CD4-positive, alpha-beta T cell (primary cell): ENCODE measurements at regions of chr14 and their contacts with region 1.

Region 1: GRCh38 chr14:35121887-35122695 is at the starts of genes PPP2R3C and PRORP:
- DNase-seq: peak; percentile 82 to 98 (median 87)
- ATAC-seq: peak; percentile 81
- H3K4me3 ChIP-seq: peak within 1 kb of the TSS; percentile 75
- H3K4me3 Mint-ChIP-seq: peak within 1 kb of the TSS; percentile 100
- H3K27ac ChIP-seq: peak within 1 kb of the TSS; percentile 99
- H3K27ac Mint-ChIP-seq: peak within 1 kb of the TSS; percentile 99
- H3K4me1 ChIP-seq: peaks cover 56% of the 10 kb centered on the region
- H3K4me1 Mint-ChIP-seq: peaks cover 79% of the 10 kb centered on the region
- H3K27me3 ChIP-seq: no peaks in the 10 kb centered on the region
- H3K27me3 Mint-ChIP-seq: no peaks in the 10 kb centered on the region
- CTCF ChIP-seq: no peak
- total RNA-seq, gene PPP2R3C: 34.9 to 37.6 TPM
- total RNA-seq, gene PRORP: 27.0 to 32.0 TPM

Region 2: GRCh38 chr14:34539407-34540180 is 582.5 kb before region 1 on chr14 and contains the start of gene EAPP:
- CTCF ChIA-PET with region 1: no interaction called
- POLR2A ChIA-PET with region 1: no interaction called
- intact Hi-C with region 1: loop called in 1 of 2 experiments (anchors 5 kb)
- DNase-seq: peak; percentile 90 to 97 (median 95)
- ATAC-seq: peak; percentile 97
- H3K4me3 ChIP-seq: peak within 1 kb of the TSS; percentile 88
- H3K4me3 Mint-ChIP-seq: peak within 1 kb of the TSS; percentile 99
- H3K27ac ChIP-seq: peak within 1 kb of the TSS; percentile 89 to 93
- H3K27ac Mint-ChIP-seq: peak within 1 kb of the TSS; percentile 98
- H3K4me1 ChIP-seq: peaks cover 31% of the 10 kb centered on the region
- H3K4me1 Mint-ChIP-seq: peaks cover 33% of the 10 kb centered on the region
- H3K27me3 ChIP-seq: no peaks in the 10 kb centered on the region
- H3K27me3 Mint-ChIP-seq: no peaks in the 10 kb centered on the region
- CTCF ChIP-seq: no peak
- total RNA-seq, gene EAPP: 94.5 to 98.3 TPM

Region 3: GRCh38 chr14:34875031-34875922 is 246.8 kb before region 1 on chr14 and contains the start of gene BAZ1A:
- CTCF ChIA-PET with region 1: no interaction called
- POLR2A ChIA-PET with region 1: interaction called, 18 read pairs
- intact Hi-C with region 1: loop called in 1 of 2 experiments (anchors 2 kb)
- DNase-seq: peak; percentile 1 to 82 (median 18)
- ATAC-seq: peak; percentile 9
- H3K4me3 ChIP-seq: peak within 1 kb of the TSS; percentile 96
- H3K4me3 Mint-ChIP-seq: peak within 1 kb of the TSS; percentile 100
- H3K27ac ChIP-seq: peak within 1 kb of the TSS; percentile 100
- H3K27ac Mint-ChIP-seq: peak within 1 kb of the TSS; percentile 97
- H3K4me1 ChIP-seq: peaks cover 19% of the 10 kb centered on the region
- H3K4me1 Mint-ChIP-seq: peaks cover 40% of the 10 kb centered on the region
- H3K27me3 ChIP-seq: no peaks in the 10 kb centered on the region
- H3K27me3 Mint-ChIP-seq: no peaks in the 10 kb centered on the region
- CTCF ChIP-seq: no peak
- total RNA-seq, gene BAZ1A: 46.5 to 52.3 TPM

Region 4: DNA sequence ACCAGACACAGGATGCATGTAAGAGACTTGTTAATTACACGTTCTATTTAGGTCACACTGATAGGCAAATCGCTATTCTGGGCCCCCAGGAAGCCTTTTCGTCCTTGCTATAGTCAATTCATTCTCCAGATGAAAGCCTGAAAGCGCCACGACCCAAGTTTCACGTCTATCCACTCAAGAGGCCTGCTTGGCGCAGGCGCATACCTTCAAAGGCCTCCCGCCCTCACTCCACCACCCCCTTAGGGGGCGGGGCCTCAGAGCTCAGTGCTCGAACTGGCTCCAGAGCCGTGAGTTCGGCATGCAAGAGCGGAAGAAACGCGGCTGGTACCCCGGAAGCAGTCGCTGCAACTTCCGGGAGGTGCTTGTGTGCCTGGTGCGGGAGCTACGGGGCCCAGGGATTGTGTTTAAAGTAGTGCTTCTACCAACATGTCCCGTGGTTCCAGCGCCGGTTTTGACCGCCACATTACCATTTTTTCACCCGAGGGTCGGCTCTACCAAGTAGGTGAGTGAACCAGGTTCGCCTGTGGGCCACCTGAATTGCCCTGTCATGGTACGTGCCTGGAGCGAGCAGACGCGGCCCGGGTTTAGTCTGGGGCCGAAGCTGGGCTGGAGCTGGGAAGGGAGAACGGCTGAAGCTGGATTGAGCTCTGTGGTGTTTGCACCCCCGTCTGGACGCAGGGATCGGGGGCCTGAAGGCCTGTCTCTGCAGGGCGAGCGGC is 170.1 kb after region 1 on chr14 and contains the start of gene PSMA6:
- CTCF ChIA-PET with region 1: interaction called, 3 read pairs
- POLR2A ChIA-PET with region 1: interaction called, 28 read pairs
- intact Hi-C with region 1: loop called (anchors 1 to 2 kb)
- DNase-seq: peak; percentile 97 to 100 (median 99)
- ATAC-seq: peak; percentile 96
- H3K4me3 ChIP-seq: peak within 1 kb of the TSS; percentile 78
- H3K4me3 Mint-ChIP-seq: peak within 1 kb of the TSS; percentile 98
- H3K27ac ChIP-seq: peak within 1 kb of the TSS; percentile 80 to 86
- H3K27ac Mint-ChIP-seq: peak within 1 kb of the TSS; percentile 95
- H3K4me1 ChIP-seq: peaks cover 38% of the 10 kb centered on the region
- H3K4me1 Mint-ChIP-seq: peaks cover 50% of the 10 kb centered on the region
- H3K27me3 ChIP-seq: no peaks in the 10 kb centered on the region
- H3K27me3 Mint-ChIP-seq: no peaks in the 10 kb centered on the region
- CTCF ChIP-seq: no peak
- total RNA-seq, gene PSMA6: 80.8 TPM

Region 5: DNA sequence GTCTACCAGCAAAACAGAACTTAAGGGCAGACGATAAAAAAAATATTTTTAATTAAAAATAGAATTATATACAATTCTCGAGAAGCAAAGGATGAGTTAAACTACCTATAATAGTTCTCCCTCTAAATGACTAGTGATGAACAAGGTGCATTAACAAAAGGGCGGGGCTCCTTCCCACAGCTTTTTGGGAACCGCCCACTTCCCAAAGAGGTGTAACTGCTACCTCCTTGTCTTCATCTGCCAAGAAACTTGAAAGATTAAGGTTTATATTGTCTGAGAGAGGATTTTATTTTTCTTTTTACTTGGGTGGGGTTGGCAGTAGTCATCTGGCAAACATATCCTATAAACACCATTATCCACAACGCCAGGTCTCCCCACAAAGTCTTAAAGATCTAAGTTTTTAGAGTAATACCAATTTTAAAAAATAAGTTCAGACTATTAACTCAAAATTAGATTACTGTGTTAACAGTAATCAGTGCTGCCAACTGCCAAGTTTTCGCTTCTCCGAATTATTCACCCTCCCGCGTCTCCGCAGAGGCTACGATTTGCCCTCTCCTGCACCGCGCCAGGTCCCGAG is 686.1 kb after region 1 on chr14:
- CTCF ChIA-PET with region 1: no interaction called
- POLR2A ChIA-PET with region 1: no interaction called
- intact Hi-C with region 1: loop called in 1 of 2 experiments (anchors 10 kb)
- DNase-seq: peak in 6 of 14 experiments; percentile 15 to 53 (median 40)
- ATAC-seq: no peak
- H3K4me3 ChIP-seq: peak overlapping the region; percentile 85
- H3K4me3 Mint-ChIP-seq: peak overlapping the region; percentile 99
- H3K27ac ChIP-seq: peak overlapping the region; percentile 75 to 88
- H3K27ac Mint-ChIP-seq: peak overlapping the region; percentile 88
- H3K4me1 ChIP-seq: peaks cover 17% of the 10 kb centered on the region
- H3K4me1 Mint-ChIP-seq: peaks cover 44% of the 10 kb centered on the region
- H3K27me3 ChIP-seq: no peaks in the 10 kb centered on the region
- H3K27me3 Mint-ChIP-seq: no peaks in the 10 kb centered on the region
- CTCF ChIP-seq: no peak